BJ (cell line): ENCODE measurements at regions of chr20 and their contacts with region 1.

Region 1: GRCh38 chr20:43456809-43457639 is 672 bp upstream of the SRSF6 start:
- DNase-seq: peak; percentile 56
- H3K4me3 ChIP-seq: peak overlapping the region; percentile 96
- H3K27me3 ChIP-seq: peaks cover 5% of the 10 kb centered on the region
- CTCF ChIP-seq: no peak

Region 2: GRCh38 chr20:43389892-43390626 is 67.0 kb before region 1 on chr20:
- CTCF ChIA-PET with region 1: no interaction called
- POLR2A ChIA-PET with region 1: interaction called, 10 read pairs
- DNase-seq: no peak
- H3K4me3 ChIP-seq: no peak overlapping the region
- H3K27me3 ChIP-seq: no peaks in the 10 kb centered on the region
- CTCF ChIP-seq: peak; percentile 61

Region 3: DNA sequence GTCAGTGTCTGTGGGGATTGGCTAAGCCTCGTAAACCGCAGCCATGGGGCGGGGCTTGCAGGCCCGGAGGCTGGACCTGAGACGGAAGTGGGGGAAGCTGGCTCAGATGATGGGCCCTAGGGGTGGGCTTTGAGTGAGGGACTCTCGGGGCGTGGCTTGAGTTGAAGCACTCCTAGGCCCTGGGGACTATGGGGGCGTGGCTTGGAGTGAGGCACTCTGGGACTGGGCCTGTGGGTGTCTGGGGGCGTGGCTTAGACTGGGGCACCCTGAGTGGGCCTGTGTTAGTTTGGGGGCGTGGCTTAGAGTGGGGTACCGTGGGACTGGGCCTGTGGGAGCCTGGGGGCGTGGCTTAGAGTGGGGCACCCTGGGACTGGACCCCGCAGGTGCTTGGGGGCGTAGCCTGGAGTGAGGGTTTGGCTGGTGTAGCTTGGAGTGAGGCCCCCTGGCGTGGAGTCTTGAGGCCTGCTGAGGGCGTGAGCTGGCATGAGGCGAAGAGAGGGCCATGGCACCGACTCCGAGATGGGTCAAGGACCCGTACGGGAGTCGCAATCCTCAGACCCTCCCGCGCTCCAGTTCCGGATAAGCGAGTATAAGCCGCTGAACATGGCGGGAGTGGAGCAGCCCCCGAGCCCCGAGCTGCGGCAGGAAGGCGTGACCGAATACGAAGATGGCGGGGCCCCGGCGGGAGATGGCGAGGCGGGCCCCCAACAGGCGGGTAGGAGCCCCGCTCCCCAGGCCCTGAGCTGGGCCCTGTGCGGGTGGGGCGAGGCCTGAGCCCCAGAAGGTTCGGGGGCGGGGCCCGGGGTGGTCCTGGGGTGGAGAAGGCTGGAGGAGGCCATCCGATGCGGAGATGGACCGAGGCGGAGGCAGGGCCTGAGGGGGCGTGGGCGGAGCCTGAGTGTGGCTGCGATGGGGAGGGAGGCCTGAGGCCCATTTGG is 57.3 kb after region 1 on chr20:
- CTCF ChIA-PET with region 1: no interaction called
- POLR2A ChIA-PET with region 1: interaction called, 29 read pairs
- DNase-seq: peak; percentile 93
- H3K4me3 ChIP-seq: peak overlapping the region; percentile 67
- H3K27me3 ChIP-seq: no peaks in the 10 kb centered on the region; the same call in 1 of the 2 replicates
- CTCF ChIP-seq: peak; percentile 43

Region 4: DNA sequence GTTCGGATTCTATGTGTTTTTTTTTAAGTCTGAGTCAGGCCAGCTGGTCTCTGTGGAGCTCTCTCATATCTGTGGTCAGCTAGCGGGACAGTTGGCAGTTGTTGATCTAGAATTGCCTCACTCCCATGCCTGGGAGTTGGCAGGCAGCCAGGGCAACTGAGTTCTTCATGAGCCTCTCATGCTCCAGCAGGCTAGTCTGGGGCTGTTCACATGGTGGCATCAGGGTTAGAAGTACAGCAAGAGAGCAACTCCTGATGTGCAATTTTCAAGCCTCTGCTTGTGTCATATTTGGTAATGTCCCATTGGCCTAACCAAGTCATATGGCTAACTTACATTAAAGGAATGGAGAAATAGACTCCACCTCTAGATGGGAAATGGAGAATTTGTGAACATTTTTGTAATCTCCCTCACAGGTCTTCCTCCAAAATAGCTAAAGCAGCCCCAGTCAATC is 127.0 kb after region 1 on chr20:
- CTCF ChIA-PET with region 1: no interaction called
- POLR2A ChIA-PET with region 1: interaction called, 13 read pairs
- DNase-seq: peak; percentile 86
- H3K4me3 ChIP-seq: no peak overlapping the region
- H3K27me3 ChIP-seq: no peaks in the 10 kb centered on the region
- CTCF ChIP-seq: no peak

Region 5: GRCh38 chr20:44166477-44166876 is 709.5 kb after region 1 on chr20:
- CTCF ChIA-PET with region 1: no interaction called
- POLR2A ChIA-PET with region 1: interaction called, 10 read pairs
- DNase-seq: peak; percentile 30
- H3K4me3 ChIP-seq: no peak overlapping the region
- H3K27me3 ChIP-seq: no peaks in the 10 kb centered on the region
- CTCF ChIP-seq: no peak